ENCODE measurements at regions of chr20 and their contacts with region 1.

Region 1: GRCh38 chr20:50189681-50190582 is 698 bp upstream of the CEBPB start:
- DNase-seq: peak; percentile 89 to 92
- ATAC-seq: peak; percentile 76 to 87 (median 78)
- H3K4me3 ChIP-seq: peak overlapping the region; percentile 71 to 96 (median 88)
- H3K27ac ChIP-seq: peak overlapping the region; percentile 96 to 99 (median 99)
- H3K4me1 ChIP-seq: peaks cover 6 to 35% (median 24%) of the 10 kb centered on the region in 9 donors
- H3K27me3 ChIP-seq: peaks cover 0 to 9% (median 0%) of the 10 kb centered on the region in 7 donors
- CTCF ChIP-seq: peak; percentile 63 to 87 (median 84)

Region 2: DNA sequence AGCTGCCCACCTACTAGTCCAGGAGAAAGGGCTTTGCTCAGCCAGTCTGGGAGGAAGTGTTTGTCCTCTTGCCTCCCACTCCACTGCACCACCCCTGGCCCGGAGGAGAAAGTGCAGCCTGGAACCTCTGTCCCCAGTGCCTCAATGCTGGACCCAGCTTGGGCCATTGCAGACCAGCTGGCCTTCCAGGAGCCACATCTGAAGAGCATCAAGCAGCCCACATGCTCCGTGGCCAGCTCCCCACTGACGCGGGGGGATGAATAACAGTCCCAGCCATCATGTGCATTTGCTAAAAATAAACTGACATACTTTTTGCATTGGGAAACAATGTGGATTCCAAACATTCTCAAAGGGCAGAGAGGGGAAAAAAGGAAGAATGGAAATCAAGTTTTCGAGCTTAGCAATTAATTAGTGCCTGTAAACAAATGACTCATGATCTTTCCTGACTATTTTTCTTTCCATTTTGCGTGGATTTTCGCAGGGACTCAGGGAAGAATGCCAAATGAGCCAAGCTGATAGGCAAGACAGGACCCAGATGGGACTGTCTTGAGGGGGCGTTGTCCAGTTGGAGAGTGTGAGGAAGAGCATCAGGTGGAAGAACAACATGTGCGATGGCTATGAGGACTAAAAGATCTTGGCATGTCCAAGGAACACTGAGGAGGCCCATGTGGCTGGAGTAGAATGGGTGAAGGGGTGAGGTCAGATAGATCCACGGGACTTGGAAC is 34.8 kb after region 1 on chr20:
- intact Hi-C with region 1: loop called in 1 of 10 experiments (anchors 1 kb)
- DNase-seq: peak; percentile 50 to 68
- ATAC-seq: peak; percentile 60 to 90 (median 88)
- H3K4me3 ChIP-seq: no peak overlapping the region
- H3K27ac ChIP-seq: peak overlapping the region; percentile 22 to 83 (median 68)
- H3K4me1 ChIP-seq: peaks cover 0 to 79% (median 13%) of the 10 kb centered on the region in 9 donors
- H3K27me3 ChIP-seq: no peaks in the 10 kb centered on the region
- CTCF ChIP-seq: peak in 6 of 9 donors; percentile 8 to 32 (median 27)

Region 3: DNA sequence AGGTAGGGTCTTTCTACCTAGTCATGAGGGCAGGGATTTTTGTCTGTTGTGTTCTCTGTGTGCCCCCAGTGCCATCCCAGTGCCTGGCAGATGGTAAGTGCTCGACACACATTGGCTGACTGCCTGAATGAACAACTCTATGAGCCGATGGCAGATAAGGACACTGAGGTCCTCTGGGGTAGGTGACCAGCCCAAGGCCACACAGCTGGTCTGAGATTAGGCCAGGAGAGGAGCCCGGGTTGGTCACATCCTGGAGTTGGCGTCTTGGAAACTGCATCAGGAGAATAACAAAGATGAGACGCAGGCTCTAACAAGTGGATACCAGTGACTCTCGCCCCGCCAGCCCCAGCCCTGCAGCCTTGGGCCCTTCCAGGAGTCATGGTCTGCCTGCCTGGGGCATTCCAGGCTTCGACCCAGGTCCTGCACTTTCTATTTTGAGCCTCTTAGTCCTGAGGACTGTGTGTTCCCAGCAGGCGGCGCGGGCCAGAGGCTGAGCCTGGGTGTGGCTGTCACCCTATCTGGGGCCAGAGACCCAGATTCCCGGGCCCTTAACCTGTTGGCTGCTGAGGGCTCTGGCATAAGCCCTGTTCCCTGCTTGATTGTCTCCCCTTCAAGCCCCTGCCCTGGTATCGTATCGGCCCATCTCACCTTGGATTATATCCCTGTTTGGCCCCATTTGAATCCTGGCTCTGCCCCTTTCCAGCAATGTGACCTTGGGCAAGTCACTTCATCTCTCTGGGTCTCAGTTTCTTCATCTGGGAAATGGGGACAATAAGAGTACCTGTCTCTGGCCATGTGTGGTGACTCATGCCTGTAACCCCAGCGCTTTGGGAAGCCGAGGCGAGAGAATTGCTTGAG is 89.0 kb after region 1 on chr20:
- intact Hi-C with region 1: loop called in 6 of 10 experiments (anchors 2 to 10 kb)
- DNase-seq: peak; percentile 74 to 84
- ATAC-seq: peak; percentile 63 to 88 (median 84)
- H3K4me3 ChIP-seq: peak overlapping the region in 1 of 10 donors; percentile 42
- H3K27ac ChIP-seq: peak overlapping the region; percentile 64 to 96 (median 76)
- H3K4me1 ChIP-seq: peaks cover 7 to 81% (median 26%) of the 10 kb centered on the region in 9 donors
- H3K27me3 ChIP-seq: no peaks in the 10 kb centered on the region
- CTCF ChIP-seq: peak in 8 of 9 donors; percentile 10 to 58 (median 46)

Region 4: GRCh38 chr20:50308513-50309279 is 118.8 kb after region 1 on chr20:
- intact Hi-C with region 1: loop called in 3 of 10 experiments (anchors 1 to 5 kb)
- DNase-seq: peak; percentile 89 to 90
- ATAC-seq: peak; percentile 57 to 92 (median 80)
- H3K4me3 ChIP-seq: peak overlapping the region in 7 of 10 donors; percentile 0 to 43 (median 28)
- H3K27ac ChIP-seq: peak overlapping the region; percentile 67 to 96 (median 90)
- H3K4me1 ChIP-seq: peaks cover 28 to 90% (median 67%) of the 10 kb centered on the region in 9 donors
- H3K27me3 ChIP-seq: no peaks in the 10 kb centered on the region
- CTCF ChIP-seq: peak in 7 of 9 donors; percentile 8 to 52 (median 30)

Region 5: GRCh38 chr20:50379049-50379990 is 189.4 kb after region 1 on chr20:
- intact Hi-C with region 1: loop called in 4 of 10 experiments (anchors 2 to 10 kb)
- DNase-seq: peak; percentile 89 to 94
- ATAC-seq: peak; percentile 84 to 92 (median 90)
- H3K4me3 ChIP-seq: peak overlapping the region in 8 of 10 donors; percentile 5 to 47 (median 33)
- H3K27ac ChIP-seq: peak overlapping the region; percentile 57 to 86 (median 81)
- H3K4me1 ChIP-seq: peaks cover 10 to 57% (median 24%) of the 10 kb centered on the region in 9 donors
- H3K27me3 ChIP-seq: no peaks in the 10 kb centered on the region
- CTCF ChIP-seq: no peak

Region 6: GRCh38 chr20:50460460-50461267 is 270.7 kb after region 1 on chr20:
- intact Hi-C with region 1: loop called in 9 of 10 experiments (anchors 1 to 2 kb)
- DNase-seq: peak; percentile 86 to 90
- ATAC-seq: peak; percentile 87 to 92 (median 90)
- H3K4me3 ChIP-seq: no peak overlapping the region
- H3K27ac ChIP-seq: peak overlapping the region in 9 of 10 donors; percentile 41 to 70 (median 52)
- H3K4me1 ChIP-seq: peaks cover 6 to 44% (median 22%) of the 10 kb centered on the region in 9 donors
- H3K27me3 ChIP-seq: no peaks in the 10 kb centered on the region
- CTCF ChIP-seq: peak; percentile 71 to 97 (median 94)

Region 7: DNA sequence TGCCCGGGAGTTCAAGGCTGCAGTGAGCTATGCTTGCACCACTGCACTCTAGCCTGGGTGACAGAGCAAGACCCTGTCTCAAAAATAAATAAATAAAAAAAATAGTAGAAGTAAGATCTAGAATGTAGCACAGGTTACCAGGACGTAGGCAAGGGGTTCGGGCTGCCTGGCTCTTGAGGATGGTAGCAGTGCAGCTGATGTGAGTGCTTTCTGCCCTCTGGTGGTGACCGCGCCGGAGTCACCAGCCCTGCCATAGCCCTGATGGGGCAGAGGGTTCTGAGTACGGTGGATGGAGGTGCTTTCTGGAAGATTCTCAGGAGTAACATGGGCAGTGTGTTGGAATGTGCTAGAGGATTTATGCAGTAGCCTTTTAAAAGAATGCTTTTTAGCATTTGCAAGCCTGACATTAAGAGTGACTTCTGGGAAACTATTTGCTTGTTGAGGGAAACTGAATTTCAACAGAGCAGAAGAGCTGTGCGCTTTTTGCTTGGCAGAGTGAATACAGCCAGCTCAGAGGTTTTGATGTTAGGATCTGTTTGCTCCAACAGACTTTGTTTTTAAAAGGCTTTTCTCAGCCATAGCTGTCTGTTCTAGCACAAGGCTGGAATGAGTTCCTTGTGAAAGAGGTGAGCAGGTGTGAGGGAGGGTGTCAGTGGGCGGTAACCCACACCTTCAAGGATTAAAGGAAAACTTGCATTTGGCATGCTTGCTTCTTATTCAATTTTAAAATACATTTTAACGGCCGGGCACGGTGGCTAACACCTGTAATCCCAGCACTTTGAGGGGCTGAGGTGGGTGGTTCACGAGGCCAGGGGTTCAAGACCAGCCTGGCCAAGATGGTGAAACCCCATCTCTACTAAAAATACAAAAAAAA is 386.2 kb after region 1 on chr20:
- intact Hi-C with region 1: loop called in 9 of 10 experiments (anchors 2 to 5 kb)
- DNase-seq: peak; percentile 61 to 71
- ATAC-seq: peak; percentile 52 to 75 (median 66)
- H3K4me3 ChIP-seq: no peak overlapping the region
- H3K27ac ChIP-seq: peak overlapping the region in 7 of 10 donors; percentile 2 to 73 (median 38)
- H3K4me1 ChIP-seq: peaks cover 10 to 66% (median 44%) of the 10 kb centered on the region in 9 donors
- H3K27me3 ChIP-seq: no peaks in the 10 kb centered on the region
- CTCF ChIP-seq: peak; percentile 34 to 81 (median 72)